Activated T-helper 1 cell treated with anti-CD3 and anti-CD28 coated beads, Interleukin-12 subunit alpha, Interleukin-12 subunit beta, Interleukin-2, Interleukin-4 antibody, amounts not matched to agents 30 ng/mL and 10 ng/mL and 1 ng/mL, durations not matched to agents 14 hours and 24 hours and 36 hours (primary cell): ENCODE measurements at regions of chr10 and their contacts with region 1.

Region 1: DNA sequence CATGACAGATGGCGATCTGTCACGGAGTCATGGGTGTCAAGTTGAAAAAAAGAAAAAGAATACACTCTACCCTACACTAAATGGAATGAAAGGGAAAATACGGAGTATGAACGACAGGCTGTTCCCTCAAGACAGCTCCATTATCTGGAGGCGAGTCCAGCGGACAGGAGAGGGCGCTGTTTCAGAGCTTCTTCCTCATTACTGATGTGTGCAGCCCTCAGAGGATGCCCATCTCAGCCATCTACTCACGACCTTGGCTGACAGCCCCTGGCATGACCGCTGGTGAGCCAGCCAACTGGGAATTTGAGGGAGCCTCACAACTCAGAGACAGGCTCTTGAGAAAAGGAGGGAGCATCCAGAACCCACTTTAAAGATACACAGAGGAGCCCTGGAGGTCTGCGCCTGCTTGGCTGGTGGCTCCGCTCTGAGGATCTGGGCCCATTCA is 49.6 kb upstream of the SMNDC1 start:
- DNase-seq: peak; percentile 72
- H3K4me3 Mint-ChIP-seq: peak overlapping the region; percentile 82
- H3K27ac Mint-ChIP-seq: peak overlapping the region; percentile 97
- H3K4me1 Mint-ChIP-seq: peaks cover 82% of the 10 kb centered on the region
- H3K27me3 Mint-ChIP-seq: no peaks in the 10 kb centered on the region

Region 2: DNA sequence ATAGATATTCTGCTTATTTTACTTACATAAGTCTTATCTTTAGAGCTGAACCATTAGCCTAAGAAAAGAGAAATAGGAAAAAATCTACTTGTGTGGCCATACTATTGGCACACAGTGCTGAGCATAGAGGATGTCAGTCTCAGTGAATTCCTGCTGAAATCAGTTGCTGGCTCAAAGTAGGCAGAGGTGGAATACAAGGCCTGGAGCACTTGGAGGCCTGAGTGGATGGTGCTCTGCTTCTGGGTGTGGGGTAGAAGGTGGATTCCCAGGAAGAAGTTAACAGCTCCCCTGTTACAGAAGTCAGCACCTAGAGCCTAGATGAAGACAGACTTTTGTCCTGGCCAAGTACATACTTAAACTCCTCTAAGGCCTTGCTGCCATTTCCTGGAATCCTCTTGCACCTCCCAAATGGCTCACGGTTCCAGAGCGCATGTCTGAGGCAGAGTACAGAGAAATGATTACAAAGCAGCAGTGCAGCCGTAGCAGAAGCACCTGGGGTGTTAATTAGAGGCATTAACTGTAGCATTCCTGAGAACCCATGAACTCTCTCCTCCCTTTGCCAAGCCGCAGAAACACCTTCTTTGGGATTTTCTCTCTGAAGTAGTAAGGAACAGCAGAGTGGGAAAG is 413.0 kb before region 1 on chr10:
- intact Hi-C with region 1: no loop called
- DNase-seq: no peak
- H3K4me3 Mint-ChIP-seq: no peak overlapping the region
- H3K27ac Mint-ChIP-seq: no peak overlapping the region
- H3K4me1 Mint-ChIP-seq: no peaks in the 10 kb centered on the region
- H3K27me3 Mint-ChIP-seq: peaks cover 2% of the 10 kb centered on the region

Region 3: DNA sequence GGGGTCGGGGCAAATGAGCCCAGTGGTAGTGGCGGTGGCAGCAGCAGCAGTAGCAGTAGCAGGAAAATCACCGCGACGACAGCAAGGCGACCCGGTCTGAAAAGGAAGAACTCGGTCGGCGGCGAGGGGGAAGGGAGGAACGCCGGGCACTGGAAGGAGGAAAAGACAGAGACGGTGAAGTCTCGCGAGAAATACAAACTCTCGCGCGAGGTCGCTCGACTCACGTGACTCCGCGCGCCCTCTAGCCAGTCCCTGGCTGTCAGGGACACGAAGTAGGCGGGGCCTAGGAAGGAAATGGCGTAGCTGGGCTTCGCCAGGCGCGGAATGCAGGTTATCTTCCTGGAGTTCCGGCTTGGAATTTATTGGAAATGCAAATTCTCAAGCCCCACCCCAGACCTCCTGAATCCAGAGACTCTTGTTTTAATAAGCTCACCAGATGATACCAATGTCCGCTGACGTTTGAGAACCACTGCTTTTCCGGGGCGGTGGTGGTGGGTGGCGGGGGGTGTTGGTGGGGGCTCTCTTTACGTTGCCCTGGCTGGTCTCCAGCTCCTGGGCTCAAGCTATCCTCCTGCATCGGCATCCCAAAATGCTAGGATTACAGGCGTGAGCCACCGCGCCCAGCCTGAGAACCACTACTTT is 49.4 kb before region 1 on chr10 and contains the start of gene SMNDC1:
- intact Hi-C with region 1: loop called (anchors 1 kb)
- DNase-seq: peak; percentile 96
- H3K4me3 Mint-ChIP-seq: peak within 1 kb of the TSS; percentile 97
- H3K27ac Mint-ChIP-seq: peak within 1 kb of the TSS; percentile 96
- H3K4me1 Mint-ChIP-seq: peaks cover 48% of the 10 kb centered on the region
- H3K27me3 Mint-ChIP-seq: no peaks in the 10 kb centered on the region
- total RNA-seq, gene SMNDC1: 47.8 and 48.0 TPM in 2 replicates

Region 4: GRCh38 chr10:110336111-110336721 is 18.1 kb before region 1 on chr10:
- intact Hi-C with region 1: loop called (anchors 2 kb)
- DNase-seq: no peak
- H3K4me3 Mint-ChIP-seq: no peak overlapping the region
- H3K27ac Mint-ChIP-seq: peak overlapping the region; percentile 46
- H3K4me1 Mint-ChIP-seq: peaks cover 53% of the 10 kb centered on the region
- H3K27me3 Mint-ChIP-seq: no peaks in the 10 kb centered on the region

Region 5: DNA sequence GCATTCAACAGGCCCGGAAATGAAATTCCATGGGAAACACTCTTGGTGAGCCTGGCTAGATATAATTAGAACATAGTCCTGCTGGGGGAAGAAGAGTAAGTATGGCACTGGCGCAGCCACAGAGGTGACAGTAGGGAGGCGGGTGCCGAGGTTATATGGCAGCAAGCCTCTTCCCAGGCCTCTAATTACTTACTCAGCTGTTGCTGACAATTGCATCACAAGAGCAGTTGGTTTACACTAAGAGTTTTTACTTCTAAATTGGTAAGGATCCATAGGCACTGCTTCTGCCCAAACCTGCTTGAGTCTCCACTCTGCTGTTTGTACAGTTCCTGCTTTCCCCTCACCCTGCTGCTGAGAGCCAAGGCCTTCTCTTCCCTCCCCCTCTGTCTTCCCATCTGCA is 50.1 kb after region 1 on chr10:
- intact Hi-C with region 1: no loop called
- DNase-seq: no peak
- H3K4me3 Mint-ChIP-seq: no peak overlapping the region
- H3K27ac Mint-ChIP-seq: no peak overlapping the region
- H3K4me1 Mint-ChIP-seq: peaks cover 61% of the 10 kb centered on the region
- H3K27me3 Mint-ChIP-seq: peaks cover 10% of the 10 kb centered on the region

Region 6: DNA sequence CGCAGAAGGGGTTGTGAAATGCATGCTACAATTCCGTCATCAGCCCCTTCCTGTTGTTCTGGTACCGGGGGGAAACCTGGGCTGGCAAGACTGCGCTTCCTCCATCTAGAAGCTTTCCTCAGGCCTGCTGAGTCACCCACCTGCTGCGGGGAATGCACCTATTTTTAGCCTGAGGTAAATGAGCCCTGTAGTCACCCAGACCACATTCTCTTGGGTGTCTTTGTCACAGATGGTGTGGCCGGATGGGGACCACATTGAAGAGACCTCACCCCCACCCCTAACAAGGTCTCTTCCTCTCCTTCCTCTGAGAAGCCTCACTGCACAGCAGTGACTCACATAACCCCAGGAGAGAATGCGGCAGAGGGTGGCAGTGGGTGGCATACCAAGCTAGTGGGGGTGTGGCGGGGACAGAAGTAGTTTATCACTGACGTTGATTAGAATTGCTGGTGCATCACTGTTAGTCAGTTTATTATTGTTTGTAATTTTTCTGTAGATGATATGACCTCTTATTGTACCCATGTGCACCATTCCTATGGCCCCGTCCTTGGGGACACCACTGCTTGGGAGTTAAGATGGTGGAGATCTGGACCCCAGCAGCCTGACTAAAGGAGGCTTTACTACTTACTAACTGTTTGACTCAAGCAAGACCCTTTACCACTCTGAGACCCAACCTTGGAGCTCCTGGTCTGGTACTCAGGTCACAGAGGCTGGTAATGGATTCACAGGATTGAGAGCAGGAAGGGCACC is 60.4 kb after region 1 on chr10:
- intact Hi-C with region 1: loop called (anchors 1 kb)
- DNase-seq: peak; percentile 87
- H3K4me3 Mint-ChIP-seq: peak overlapping the region; percentile 56
- H3K27ac Mint-ChIP-seq: peak overlapping the region; percentile 97
- H3K4me1 Mint-ChIP-seq: peaks cover 74% of the 10 kb centered on the region
- H3K27me3 Mint-ChIP-seq: peaks cover 1% of the 10 kb centered on the region

Region 7: DNA sequence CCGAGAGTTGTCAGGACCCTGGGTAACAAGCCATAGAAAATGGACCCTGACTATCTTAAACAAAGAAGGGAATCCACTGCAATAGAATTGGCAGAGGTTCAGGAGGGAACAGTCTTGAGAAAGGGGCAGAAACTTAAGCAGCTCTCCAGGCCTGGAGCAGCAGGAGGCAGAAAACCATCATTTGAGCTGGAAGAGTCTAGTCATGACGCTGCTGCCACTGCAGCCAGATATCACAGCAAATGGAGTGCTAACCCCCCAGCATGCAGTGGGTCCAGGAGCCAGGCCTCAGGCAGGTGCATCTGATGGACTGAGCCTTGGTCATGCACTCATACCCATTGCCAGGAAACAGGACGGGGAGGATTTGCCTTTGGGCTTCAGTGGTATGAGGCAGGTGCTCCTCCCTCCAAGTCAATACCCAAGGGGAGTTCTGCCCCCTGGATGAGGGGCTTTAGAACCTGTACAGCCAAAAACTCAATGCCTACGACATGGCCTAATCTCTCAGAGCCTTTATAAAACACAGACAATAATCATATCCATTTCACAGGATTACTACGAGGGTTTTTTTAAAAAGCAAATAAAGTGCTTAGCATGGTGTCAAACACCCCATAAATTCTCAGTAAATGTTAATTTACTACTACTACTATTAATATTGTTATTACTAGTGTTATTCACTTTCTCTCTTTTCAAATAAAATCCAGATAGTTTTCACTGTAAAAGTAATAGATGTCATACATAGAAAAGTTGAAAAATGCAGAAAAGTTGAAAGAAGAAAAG is 174.1 kb after region 1 on chr10:
- intact Hi-C with region 1: loop called (anchors 1 kb)
- DNase-seq: no peak
- H3K4me3 Mint-ChIP-seq: peak overlapping the region; percentile 64
- H3K27ac Mint-ChIP-seq: peak overlapping the region; percentile 94
- H3K4me1 Mint-ChIP-seq: peaks cover 83% of the 10 kb centered on the region
- H3K27me3 Mint-ChIP-seq: no peaks in the 10 kb centered on the region

Region 8: DNA sequence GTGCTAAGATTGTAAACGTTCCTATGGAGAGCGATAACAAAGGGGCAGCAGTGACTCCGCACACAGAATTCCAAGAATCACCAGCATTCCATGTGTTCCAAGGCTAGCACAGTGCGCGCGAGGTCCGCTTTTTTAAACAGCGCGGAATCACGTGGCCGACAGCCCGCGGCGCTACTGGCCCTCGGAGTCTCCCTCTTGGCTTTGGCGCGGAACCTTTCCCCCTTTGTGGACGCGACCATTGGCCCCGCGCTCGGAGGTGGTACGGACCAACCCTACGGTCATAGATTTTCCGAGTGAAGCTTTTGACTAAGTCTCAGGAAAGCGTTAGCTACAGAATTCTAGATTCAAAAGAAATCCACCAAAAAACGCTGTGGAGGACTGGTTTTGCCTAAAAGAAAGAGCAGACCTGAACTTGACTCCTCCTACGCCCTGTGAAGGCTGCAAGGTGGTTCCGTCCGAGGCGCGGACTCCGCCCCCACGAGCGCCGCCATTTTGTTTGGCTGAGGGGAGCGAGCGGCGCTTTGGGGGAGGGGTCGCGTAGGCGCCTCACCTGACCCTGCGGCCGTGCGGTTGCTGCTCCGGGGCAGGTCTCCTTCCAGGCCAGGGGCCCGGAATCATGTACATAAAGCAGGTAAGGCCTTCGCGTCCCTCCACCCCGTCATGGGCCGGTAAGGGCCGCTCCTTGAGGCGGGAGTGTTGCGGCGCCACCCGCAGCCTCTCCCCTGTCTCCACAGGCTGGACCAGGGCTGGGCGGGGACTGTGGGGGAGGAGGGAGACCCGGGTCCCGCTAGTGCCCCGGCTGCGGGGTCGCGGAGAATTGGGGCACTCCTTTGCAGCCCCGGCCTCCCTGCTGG is 213.1 kb after region 1 on chr10 and contains the start of gene SMC3:
- intact Hi-C with region 1: loop called (anchors 1 kb)
- DNase-seq: peak; percentile 89
- H3K4me3 Mint-ChIP-seq: peak within 1 kb of the TSS; percentile 93
- H3K27ac Mint-ChIP-seq: peak within 1 kb of the TSS; percentile 96
- H3K4me1 Mint-ChIP-seq: peaks cover 44% of the 10 kb centered on the region
- H3K27me3 Mint-ChIP-seq: peaks cover 14% of the 10 kb centered on the region
- total RNA-seq, gene SMC3: 74.5 and 77.9 TPM in 2 replicates

Region 9: GRCh38 chr10:111146025-111146640 is 791.8 kb after region 1 on chr10:
- intact Hi-C with region 1: no loop called
- DNase-seq: no peak
- H3K4me3 Mint-ChIP-seq: no peak overlapping the region
- H3K27ac Mint-ChIP-seq: no peak overlapping the region
- H3K4me1 Mint-ChIP-seq: no peaks in the 10 kb centered on the region
- H3K27me3 Mint-ChIP-seq: peaks cover 7% of the 10 kb centered on the region